Ascending aorta (tissue), 2 donors: ENCODE measurements at regions of chr2 and their contacts with region 1.

Region 1: DNA sequence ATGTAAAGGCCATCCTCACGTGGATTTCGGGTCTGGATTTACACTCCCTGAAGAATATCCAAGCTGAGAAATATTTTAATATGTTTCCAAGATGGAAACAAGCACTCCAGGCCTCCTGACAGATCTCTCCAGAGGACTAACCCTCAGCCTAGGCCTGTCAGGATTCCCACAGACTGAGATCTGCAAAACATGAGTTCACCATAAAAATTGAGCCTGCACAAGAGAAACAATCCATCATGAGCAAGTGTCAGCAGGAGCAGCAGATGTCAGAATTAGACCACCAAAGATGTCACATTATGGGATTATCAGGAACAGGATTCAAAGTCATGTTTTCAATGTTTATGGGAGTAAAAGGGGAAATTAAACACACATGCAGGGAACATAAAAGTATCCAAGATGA is 191.3 kb downstream of the TFCP2L1 start:
- DNase-seq: no peak
- H3K4me3 ChIP-seq: no peak overlapping the region
- H3K27ac ChIP-seq: no peak overlapping the region
- H3K4me1 ChIP-seq: peaks cover 0 to 3% of the 10 kb centered on the region in 2 donors
- H3K27me3 ChIP-seq: no peaks in the 10 kb centered on the region
- CTCF ChIP-seq: no peak

Region 2: DNA sequence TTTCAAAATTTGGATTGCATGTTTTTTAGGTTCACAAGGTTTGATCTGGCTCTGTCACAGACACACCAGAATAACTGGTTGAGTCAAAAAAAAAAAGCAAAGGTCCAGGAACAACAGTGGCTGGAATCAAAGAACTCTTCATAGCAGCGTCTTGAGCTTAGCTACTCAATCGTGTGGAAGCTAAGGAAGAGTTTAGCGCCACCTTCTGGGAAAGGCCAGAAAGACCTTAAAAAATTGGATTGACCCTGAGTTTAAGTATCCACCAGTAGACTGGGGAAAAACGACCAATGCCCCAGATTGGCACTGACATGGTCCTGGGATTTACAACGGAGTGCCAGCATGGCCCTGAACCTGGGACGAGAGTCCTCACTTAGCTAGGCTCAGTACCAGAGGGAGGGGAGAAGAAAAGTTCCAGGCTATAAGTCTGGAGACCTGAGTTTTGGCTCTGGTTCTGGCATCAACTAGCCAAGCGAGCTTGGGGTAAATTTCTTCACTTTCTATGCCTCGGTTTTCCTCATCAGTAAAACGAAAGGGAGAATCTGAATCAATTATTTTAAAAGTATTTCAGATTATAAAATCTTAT is 262.5 kb after region 1 on chr2:
- intact Hi-C with region 1: loop called (anchors 2 kb)
- DNase-seq: no peak
- H3K4me3 ChIP-seq: no peak overlapping the region
- H3K27ac ChIP-seq: peak overlapping the region; percentile 28 to 45
- H3K4me1 ChIP-seq: peaks cover 0 to 27% of the 10 kb centered on the region in 2 donors
- H3K27me3 ChIP-seq: no peaks in the 10 kb centered on the region
- CTCF ChIP-seq: peak; percentile 46 to 69 (median 58)